ENCODE measurements at regions of chr10 and their contacts with region 1.

Region 1: GRCh38 chr10:33381451-33382242 is 47.2 kb upstream of the NRP1 start:
- DNase-seq: no peak
- ATAC-seq: no peak
- H3K4me3 ChIP-seq: no peak overlapping the region
- H3K4me1 ChIP-seq: peaks cover 3% of the 10 kb centered on the region
- CTCF ChIP-seq: no peak

Region 2: DNA sequence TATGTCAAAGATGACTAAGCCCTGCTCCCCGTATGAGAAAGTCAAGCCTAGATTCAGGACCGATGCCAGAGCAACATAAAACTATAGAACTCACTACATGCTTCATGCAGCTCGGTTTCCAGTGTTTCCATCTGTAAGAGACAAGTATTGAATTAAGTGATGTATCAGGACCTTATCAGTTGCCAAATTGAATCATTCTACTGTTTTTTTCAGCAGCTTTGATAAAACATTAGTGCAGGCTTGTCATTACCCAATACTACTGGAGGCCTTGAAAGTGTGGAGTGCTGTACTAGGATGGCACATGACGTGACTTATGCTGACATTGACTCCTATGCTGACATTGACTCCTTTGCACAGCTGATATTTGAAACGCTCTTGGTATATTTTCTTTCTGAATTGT is 36.4 kb before region 1 on chr10:
- intact Hi-C with region 1: loop called in 1 of 2 experiments (anchors 2 kb)
- DNase-seq: no peak
- ATAC-seq: no peak
- H3K4me3 ChIP-seq: no peak overlapping the region
- H3K4me1 ChIP-seq: no peaks in the 10 kb centered on the region
- CTCF ChIP-seq: no peak